Activated CD4-positive, alpha-beta memory T cell treated with anti-CD3 and anti-CD28 coated beads for 36 hours (primary cell): ENCODE measurements at regions of chr1 and their contacts with region 1.

Region 1: DNA sequence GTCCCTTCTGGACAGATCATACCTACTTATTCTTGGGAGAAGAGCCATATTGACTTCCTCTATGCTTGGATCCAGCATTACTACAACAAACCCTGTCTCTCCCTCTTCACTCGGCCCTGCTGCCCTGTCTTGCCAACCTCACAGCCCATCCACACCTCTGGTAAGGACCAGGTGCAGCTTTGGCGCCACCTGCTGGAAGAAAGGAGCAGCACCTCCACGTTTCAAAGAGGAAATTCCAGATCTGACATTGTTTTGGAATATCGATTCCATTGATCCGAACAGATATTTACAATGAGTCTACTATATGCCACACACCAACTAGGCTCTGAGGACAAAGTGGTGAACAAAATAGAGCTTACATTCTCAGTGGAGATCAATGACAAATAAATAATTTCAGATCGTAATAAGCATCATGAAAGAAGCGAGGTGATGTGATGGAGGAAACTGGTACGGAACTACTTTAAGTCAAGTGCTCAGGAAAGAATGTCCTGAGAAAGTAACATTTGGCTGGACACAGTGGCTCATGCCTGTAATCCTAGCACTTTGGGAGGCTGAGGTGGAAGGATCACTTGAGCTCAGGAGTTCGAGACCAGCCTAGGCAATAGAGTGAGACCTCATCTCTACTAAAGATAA is 18.7 kb downstream of the MFSD2A start:
- DNase-seq: peak; percentile 79
- H3K4me3 Mint-ChIP-seq: no peak overlapping the region
- H3K27ac Mint-ChIP-seq: no peak overlapping the region
- H3K4me1 Mint-ChIP-seq: peaks cover 4% of the 10 kb centered on the region
- H3K27me3 Mint-ChIP-seq: no peaks in the 10 kb centered on the region

Region 2: DNA sequence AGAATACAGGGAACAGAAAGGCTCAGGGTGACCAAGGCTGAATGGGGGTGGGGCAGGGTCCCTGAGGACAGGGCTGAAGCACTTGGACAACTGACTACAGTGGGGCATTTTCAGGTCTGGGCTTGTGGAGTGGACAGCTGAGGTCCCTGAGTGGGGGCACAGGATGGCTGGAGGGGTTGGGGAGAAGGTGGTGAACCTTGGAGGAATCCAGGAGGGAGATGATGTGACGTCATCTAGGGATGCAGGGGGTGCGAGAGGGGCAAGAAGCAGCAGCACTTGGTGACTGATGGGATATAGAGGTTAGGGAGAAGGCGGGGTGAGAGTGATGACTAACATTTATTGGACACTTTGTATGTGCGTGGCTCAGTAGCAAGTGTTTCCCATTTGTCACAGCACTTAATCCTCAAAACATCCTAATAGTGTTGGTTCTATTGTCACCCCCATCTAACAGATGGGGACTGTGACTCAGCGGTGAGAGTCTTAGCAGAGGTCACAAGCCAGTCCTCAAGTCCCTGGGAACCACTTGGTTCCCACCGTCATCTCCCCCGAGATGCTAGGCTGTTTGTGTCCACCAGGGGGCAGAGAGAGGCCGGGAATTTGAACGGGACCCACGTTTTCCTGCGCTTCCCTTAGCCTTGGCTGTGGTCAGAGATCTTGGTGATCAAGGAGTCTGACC is 157.1 kb before region 1 on chr1:
- CTCF ChIA-PET with region 1: interaction called, 66 read pairs
- POLR2A ChIA-PET with region 1: no interaction called
- intact Hi-C with region 1: loop called (anchors 1 kb)
- DNase-seq: peak; percentile 73
- H3K4me3 Mint-ChIP-seq: no peak overlapping the region
- H3K27ac Mint-ChIP-seq: no peak overlapping the region
- H3K4me1 Mint-ChIP-seq: peaks cover 16% of the 10 kb centered on the region
- H3K27me3 Mint-ChIP-seq: peaks cover 7% of the 10 kb centered on the region

Region 3: DNA sequence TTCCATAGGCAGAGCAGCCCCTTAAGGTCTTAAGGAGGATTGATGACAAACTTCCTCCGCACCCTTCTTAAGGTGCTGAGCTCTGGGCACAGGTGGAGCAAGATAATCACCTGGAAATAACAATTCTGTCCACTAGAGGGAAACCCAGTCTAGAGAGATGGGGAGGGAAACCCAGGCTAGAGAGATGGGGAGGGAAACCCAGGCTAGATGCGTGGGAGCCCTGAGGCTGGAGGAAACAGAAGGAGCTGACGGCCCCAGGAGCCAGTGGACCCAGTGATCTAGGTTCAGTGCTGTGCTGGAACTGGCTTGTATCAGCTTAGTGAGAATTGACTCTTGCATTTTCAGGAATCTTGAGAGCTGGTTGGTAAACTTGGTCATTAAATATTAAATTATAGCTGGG is 54.1 kb before region 1 on chr1:
- CTCF ChIA-PET with region 1: interaction called, 188 read pairs
- POLR2A ChIA-PET with region 1: interaction called, 7 read pairs
- intact Hi-C with region 1: loop called (anchors 1 kb)
- DNase-seq: peak; percentile 68
- H3K4me3 Mint-ChIP-seq: no peak overlapping the region
- H3K27ac Mint-ChIP-seq: no peak overlapping the region
- H3K4me1 Mint-ChIP-seq: peaks cover 2% of the 10 kb centered on the region
- H3K27me3 Mint-ChIP-seq: peaks cover 4% of the 10 kb centered on the region

Region 4: DNA sequence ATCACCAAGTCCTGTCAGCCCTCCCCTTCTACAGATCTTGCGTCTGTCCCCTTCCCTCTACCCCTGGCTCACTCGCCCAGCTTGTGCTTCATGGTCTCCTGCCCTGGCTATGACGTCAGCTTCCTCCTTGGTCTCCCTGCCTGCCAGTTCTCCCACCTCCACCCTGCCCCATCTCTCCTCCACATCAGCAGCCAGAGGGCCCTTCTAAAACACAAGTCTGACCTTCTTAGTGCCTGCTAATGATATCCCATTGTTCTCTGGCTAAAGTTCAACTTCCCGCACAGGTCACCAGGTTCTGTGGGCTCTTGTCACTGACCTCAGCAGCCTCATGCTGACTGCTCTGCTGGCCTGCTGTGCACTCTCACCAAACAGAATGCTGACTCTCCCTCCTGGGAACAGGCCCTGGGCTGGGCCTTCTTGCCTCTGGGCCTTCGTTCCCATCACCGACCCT is 47.3 kb before region 1 on chr1:
- CTCF ChIA-PET with region 1: interaction called, 188 read pairs
- POLR2A ChIA-PET with region 1: no interaction called
- intact Hi-C with region 1: no loop called
- DNase-seq: no peak
- H3K4me3 Mint-ChIP-seq: no peak overlapping the region
- H3K27ac Mint-ChIP-seq: no peak overlapping the region
- H3K4me1 Mint-ChIP-seq: no peaks in the 10 kb centered on the region
- H3K27me3 Mint-ChIP-seq: peaks cover 4% of the 10 kb centered on the region

Region 5: DNA sequence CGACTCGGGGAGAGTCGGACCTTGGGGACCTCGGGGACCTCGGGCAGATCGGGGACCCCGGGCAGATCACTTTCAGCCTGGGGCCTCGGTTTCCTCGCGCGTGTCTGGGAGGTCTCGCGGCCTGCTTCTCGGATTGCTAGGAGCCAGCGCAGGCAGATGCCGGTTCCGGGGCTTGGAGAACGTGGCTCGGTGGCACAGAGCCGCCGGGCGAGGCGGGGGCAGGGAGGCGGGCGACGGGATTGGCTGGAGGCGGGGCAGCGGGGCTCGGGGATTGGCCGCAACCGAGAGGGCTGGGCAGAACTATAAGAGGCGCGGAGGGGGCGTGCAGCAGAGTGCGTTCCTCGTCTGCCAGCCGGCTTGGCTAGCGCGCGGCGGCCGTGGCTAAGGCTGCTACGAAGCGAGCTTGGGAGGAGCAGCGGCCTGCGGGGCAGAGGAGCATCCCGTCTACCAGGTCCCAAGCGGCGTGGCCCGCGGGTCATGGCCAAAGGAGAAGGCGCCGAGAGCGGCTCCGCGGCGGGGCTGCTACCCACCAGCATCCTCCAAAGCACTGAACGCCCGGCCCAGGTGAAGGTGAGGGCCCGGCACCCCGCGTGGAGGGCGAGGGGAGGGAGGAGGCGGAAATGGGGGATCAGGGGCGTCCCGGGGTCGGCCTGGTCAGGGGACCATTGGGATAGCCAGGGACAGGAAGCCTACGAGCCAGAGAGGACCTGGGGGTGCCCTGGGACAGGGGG is 18.6 kb before region 1 on chr1 and contains the start of gene MFSD2A:
- CTCF ChIA-PET with region 1: interaction called, 16 read pairs
- POLR2A ChIA-PET with region 1: interaction called, 8 read pairs
- intact Hi-C with region 1: no loop called
- DNase-seq: peak; percentile 94
- H3K4me3 Mint-ChIP-seq: peak within 1 kb of the TSS; percentile 84
- H3K27ac Mint-ChIP-seq: peak within 1 kb of the TSS; percentile 75
- H3K4me1 Mint-ChIP-seq: peaks cover 30% of the 10 kb centered on the region
- H3K27me3 Mint-ChIP-seq: no peaks in the 10 kb centered on the region
- total RNA-seq, gene MFSD2A: 6.0 to 7.5 TPM

Region 6: GRCh38 chr1:40032240-40032891 is 58.7 kb after region 1 on chr1:
- CTCF ChIA-PET with region 1: interaction called, 44 read pairs
- POLR2A ChIA-PET with region 1: no interaction called
- intact Hi-C with region 1: no loop called
- DNase-seq: peak; percentile 61
- H3K4me3 Mint-ChIP-seq: no peak overlapping the region
- H3K27ac Mint-ChIP-seq: no peak overlapping the region
- H3K4me1 Mint-ChIP-seq: peaks cover 26% of the 10 kb centered on the region
- H3K27me3 Mint-ChIP-seq: no peaks in the 10 kb centered on the region